ENCODE measurements at regions of chr4 and their contacts with region 1.

Region 1: GRCh38 chr4:22688236-22688635 is 4.5 kb upstream of the GBA3 start:
- DNase-seq: no peak
- ATAC-seq: no peak
- H3K4me3 ChIP-seq: no peak overlapping the region
- H3K27ac ChIP-seq: no peak overlapping the region
- H3K4me1 ChIP-seq: no peaks in the 10 kb centered on the region
- H3K27me3 ChIP-seq: no peaks in the 10 kb centered on the region
- CTCF ChIP-seq: no peak

Region 2: DNA sequence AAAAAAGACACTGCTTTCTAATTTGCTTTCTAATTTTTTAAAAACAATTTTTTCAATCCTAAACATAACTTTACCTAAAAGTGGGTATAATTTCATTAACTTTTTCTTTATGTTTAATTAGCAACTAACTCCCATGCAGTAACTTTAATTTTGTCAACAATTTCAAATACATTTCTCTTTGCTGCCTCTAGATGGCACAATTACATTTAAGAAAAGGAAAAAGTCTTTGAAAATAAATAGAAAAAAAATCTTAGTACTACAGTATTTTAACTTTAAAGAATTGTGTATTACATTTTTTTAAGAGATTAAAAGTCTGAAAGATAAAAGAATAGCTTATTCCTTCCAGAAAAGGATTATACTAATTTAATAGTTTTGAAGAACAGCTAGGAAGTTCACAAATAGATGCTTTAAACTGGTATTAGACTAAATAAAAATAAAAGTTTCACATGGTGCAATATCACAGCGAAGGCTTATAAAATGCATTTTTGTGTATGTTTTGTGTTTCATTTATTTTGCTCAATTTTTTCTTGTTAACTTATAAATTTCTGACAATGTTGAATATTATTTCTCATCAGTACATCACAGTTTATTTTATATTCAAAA is 277.5 kb before region 1 on chr4:
- CTCF ChIA-PET with region 1: no interaction called
- POLR2A ChIA-PET with region 1: no interaction called
- in situ Hi-C with region 1: no loop called
- intact Hi-C with region 1: loop called (anchors 5 kb)
- DNase-seq: no peak
- ATAC-seq: no peak
- H3K4me3 ChIP-seq: no peak overlapping the region
- H3K27ac ChIP-seq: no peak overlapping the region
- H3K4me1 ChIP-seq: no peaks in the 10 kb centered on the region
- H3K27me3 ChIP-seq: no peaks in the 10 kb centered on the region
- CTCF ChIP-seq: no peak

Region 3: GRCh38 chr4:22969314-22969896 is 281.2 kb after region 1 on chr4:
- CTCF ChIA-PET with region 1: no interaction called
- POLR2A ChIA-PET with region 1: no interaction called
- in situ Hi-C with region 1: no loop called
- intact Hi-C with region 1: no loop called
- DNase-seq: no peak
- ATAC-seq: peak; percentile 81
- H3K4me3 ChIP-seq: no peak overlapping the region
- H3K27ac ChIP-seq: no peak overlapping the region
- H3K4me1 ChIP-seq: no peaks in the 10 kb centered on the region
- H3K27me3 ChIP-seq: no peaks in the 10 kb centered on the region
- CTCF ChIP-seq: no peak

Region 4: GRCh38 chr4:23237771-23238170 is 549.5 kb after region 1 on chr4:
- CTCF ChIA-PET with region 1: no interaction called
- POLR2A ChIA-PET with region 1: no interaction called
- in situ Hi-C with region 1: no loop called
- intact Hi-C with region 1: no loop called
- DNase-seq: no peak
- ATAC-seq: no peak
- H3K4me3 ChIP-seq: no peak overlapping the region
- H3K27ac ChIP-seq: no peak overlapping the region
- H3K4me1 ChIP-seq: no peaks in the 10 kb centered on the region
- H3K27me3 ChIP-seq: no peaks in the 10 kb centered on the region
- CTCF ChIP-seq: no peak

Measured in Panc1 (cell line).